CD8-positive, alpha-beta memory T cell (primary cell): ENCODE measurements at regions of chr1 and their contacts with region 1.

Region 1: DNA sequence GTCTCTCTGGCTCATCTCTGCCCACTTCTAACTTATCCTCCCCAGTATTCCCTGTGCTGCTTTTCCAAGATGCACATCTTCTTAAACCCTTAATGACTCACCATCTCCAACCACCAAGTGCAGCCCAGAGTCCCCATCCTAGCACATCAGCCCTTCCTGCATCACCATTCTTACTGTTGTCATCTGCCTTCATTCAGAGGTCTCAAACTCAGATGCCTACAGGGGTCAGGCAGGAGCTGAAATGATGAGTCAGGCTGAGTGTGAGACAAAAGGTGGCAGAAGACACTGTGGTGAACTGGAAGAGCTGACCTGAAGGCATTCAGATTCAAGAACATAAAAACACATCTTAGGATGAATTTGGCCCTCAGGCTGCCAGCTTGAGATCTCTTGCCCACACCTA is 34.6 kb downstream of the OLFML2B start:
- DNase-seq: no peak
- H3K4me3 ChIP-seq: no peak overlapping the region
- H3K4me3 Mint-ChIP-seq: no peak overlapping the region
- H3K27ac ChIP-seq: no peak overlapping the region
- H3K27ac Mint-ChIP-seq: no peak overlapping the region
- H3K4me1 ChIP-seq: no peaks in the 10 kb centered on the region
- H3K4me1 Mint-ChIP-seq: no peaks in the 10 kb centered on the region
- H3K27me3 ChIP-seq: no peaks in the 10 kb centered on the region
- H3K27me3 Mint-ChIP-seq: peaks cover 24 to 27% of the 10 kb centered on the region in 2 donors

Region 2: GRCh38 chr1:162537216-162537615 is 548.1 kb after region 1 on chr1:
- CTCF ChIA-PET with region 1: no interaction called
- POLR2A ChIA-PET with region 1: interaction called, 10 read pairs
- DNase-seq: no peak
- H3K4me3 ChIP-seq: no peak overlapping the region
- H3K4me3 Mint-ChIP-seq: no peak overlapping the region
- H3K27ac ChIP-seq: no peak overlapping the region
- H3K27ac Mint-ChIP-seq: peak overlapping the region in 1 of 8 donors; percentile 9
- H3K4me1 ChIP-seq: no peaks in the 10 kb centered on the region
- H3K4me1 Mint-ChIP-seq: no peaks in the 10 kb centered on the region
- H3K27me3 ChIP-seq: no peaks in the 10 kb centered on the region
- H3K27me3 Mint-ChIP-seq: no peaks in the 10 kb centered on the region